ENCODE measurements at regions of chr10 and their contacts with region 1.

Region 1: DNA sequence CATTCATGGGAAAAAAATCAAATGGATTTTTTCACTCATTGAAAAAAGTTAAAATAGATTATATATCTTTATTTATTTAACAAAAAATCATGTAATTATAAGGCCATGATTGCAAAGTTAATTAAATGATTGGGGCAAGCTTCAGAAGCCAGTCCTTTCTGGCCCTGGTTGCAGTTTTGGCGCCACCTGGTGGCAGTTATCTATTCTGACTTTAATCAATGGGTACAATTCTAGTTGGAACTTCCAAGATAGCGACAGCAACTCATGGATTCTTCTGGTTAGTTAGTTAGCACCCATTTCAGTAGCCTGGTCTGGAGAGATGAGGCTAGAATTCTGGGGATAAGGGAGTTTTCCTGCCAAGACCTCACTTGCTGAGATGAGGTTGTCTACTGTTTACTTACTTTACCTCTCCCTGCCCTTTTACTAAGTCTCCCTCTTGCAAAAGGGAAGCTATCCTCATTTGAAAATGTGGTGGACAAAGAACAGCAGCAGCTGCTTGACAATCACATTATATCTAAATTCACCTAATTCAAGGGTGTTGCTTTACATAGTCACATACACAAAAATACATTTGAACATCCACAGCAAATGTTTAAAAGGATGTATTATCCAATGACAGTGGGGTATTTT is 42.3 kb downstream of the NOC3L start:
- DNase-seq: no peak
- H3K4me3 ChIP-seq: no peak overlapping the region
- H3K27ac ChIP-seq: no peak overlapping the region
- H3K4me1 ChIP-seq: no peaks in the 10 kb centered on the region
- H3K27me3 ChIP-seq: no peaks in the 10 kb centered on the region
- CTCF ChIP-seq: peak; percentile 69 to 90 (median 83)
- POLR2A ChIP-seq: no peak

Region 2: GRCh38 chr10:94076321-94076841 is 244.0 kb before region 1 on chr10:
- intact Hi-C with region 1: loop called (anchors 10 kb)
- DNase-seq: peak in 1 of 2 donors; percentile 65
- H3K4me3 ChIP-seq: no peak overlapping the region
- H3K27ac ChIP-seq: no peak overlapping the region
- H3K4me1 ChIP-seq: peaks cover 10% of the 10 kb centered on the region
- H3K27me3 ChIP-seq: no peaks in the 10 kb centered on the region
- CTCF ChIP-seq: no peak
- POLR2A ChIP-seq: no peak